Right lobe of liver (tissue), 6 donors: ENCODE measurements at regions of chr13 and their contacts with region 1.

Region 1: GRCh38 chr13:113155201-113155600 is 3.2 kb upstream of the PROZ start:
- DNase-seq: no peak
- ATAC-seq: no peak
- H3K4me3 ChIP-seq: no peak overlapping the region
- H3K27ac ChIP-seq: peak overlapping the region in 1 of 3 donors; percentile 54
- H3K4me1 ChIP-seq: peaks cover 0 to 15% (median 0%) of the 10 kb centered on the region in 4 donors
- H3K27me3 ChIP-seq: no peaks in the 10 kb centered on the region
- CTCF ChIP-seq: no peak
- POLR2A ChIP-seq: no peak

Region 2: DNA sequence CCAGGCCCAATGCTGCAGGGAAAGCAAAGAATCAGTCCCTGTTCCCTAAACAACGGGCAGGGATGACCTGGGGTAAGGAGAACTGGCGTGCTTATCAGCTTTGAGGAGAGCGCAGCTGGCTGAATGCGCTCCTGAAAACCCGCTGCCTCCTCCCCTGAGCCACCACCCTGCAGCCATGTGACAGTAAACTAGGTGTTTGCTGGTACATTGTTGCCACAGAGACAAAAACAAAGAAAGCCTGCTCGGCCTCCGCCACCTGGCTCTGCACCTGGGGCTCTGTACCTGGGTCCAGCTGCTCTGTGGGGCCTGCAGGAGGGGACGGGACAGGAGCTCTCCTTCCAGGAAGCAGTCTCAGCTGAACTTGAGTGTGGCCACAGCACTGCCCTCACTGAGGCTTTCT is 164.4 kb before region 1 on chr13:
- intact Hi-C with region 1: no loop called
- DNase-seq: peak in 1 of 3 donors; percentile 15
- ATAC-seq: peak in 2 of 4 donors; percentile 4 to 49
- H3K4me3 ChIP-seq: no peak overlapping the region
- H3K27ac ChIP-seq: no peak overlapping the region
- H3K4me1 ChIP-seq: no peaks in the 10 kb centered on the region
- H3K27me3 ChIP-seq: no peaks in the 10 kb centered on the region
- CTCF ChIP-seq: no peak
- POLR2A ChIP-seq: no peak

Region 3: DNA sequence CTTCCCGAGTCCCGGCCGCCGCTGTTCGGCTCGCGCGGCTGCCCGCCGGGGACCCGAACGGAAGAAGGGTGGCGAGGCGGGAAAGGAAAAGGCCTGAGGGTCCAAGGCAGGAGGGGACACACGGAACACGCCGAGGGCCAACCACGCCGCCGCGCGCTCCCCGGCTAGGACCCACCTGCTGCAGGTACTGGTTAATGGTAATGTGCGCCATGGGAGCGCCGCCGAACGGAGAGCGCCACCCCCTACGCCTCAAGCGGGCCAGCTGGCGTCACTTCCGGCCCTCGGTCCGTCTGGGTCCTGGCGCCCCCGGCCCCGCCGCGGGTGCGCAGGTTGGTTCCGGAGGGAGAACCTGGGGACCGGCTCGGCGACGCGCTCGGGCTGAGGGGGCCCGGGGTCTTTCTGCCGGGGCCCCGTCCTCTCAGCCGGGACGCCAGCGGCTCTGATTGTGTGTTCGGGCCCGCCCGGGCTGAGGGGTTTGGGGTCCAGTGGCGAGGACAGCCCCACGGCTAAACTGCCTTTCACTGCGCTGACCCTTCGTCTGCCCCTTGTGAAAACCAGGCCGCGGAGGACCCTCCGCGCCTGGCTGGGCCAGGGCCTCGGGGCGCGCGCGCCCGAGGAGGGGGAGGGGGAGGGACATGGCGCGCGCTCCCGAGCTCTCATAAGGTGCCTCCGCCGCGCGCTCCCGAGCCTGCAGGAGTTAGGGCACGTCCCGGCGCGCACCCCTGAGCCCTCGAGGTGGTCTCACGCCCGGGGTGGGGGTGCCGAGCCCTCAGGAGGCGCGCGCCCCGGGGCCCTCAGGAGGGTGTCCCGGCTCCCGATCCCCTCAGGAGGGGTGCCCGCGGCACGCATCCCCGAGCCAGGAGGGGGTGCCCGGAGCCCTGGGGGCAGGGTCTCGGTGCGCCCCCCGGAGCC is 53.5 kb after region 1 on chr13 and contains the start of gene PCID2:
- intact Hi-C with region 1: loop called in 1 of 2 experiments (anchors 5 kb)
- DNase-seq: peak; percentile 90 to 93 (median 91)
- ATAC-seq: peak; percentile 89 to 92 (median 91)
- H3K4me3 ChIP-seq: peak within 1 kb of the TSS; percentile 79 to 98 (median 90)
- H3K27ac ChIP-seq: peak within 1 kb of the TSS; percentile 94 to 99 (median 96)
- H3K4me1 ChIP-seq: peaks cover 0 to 40% (median 12%) of the 10 kb centered on the region in 4 donors
- H3K27me3 ChIP-seq: no peaks in the 10 kb centered on the region
- CTCF ChIP-seq: peak in 2 of 4 donors; percentile 14 to 21
- POLR2A ChIP-seq: peak; percentile 82
- total RNA-seq, gene PCID2: 15.1 to 24.9 (median 19.4) TPM

Region 4: GRCh38 chr13:113364311-113364889 is 209.2 kb after region 1 on chr13:
- intact Hi-C with region 1: no loop called
- DNase-seq: no peak
- ATAC-seq: no peak
- H3K4me3 ChIP-seq: peak overlapping the region in 2 of 3 donors; percentile 33 to 43
- H3K27ac ChIP-seq: peak overlapping the region in 2 of 3 donors; percentile 26 to 51
- H3K4me1 ChIP-seq: peaks cover 0 to 28% (median 0%) of the 10 kb centered on the region in 4 donors
- H3K27me3 ChIP-seq: no peaks in the 10 kb centered on the region
- CTCF ChIP-seq: no peak
- POLR2A ChIP-seq: no peak